H1 (cell line): ENCODE measurements at regions of chr4 and their contacts with region 1.

Region 1: GRCh38 chr4:121484633-121485032 is 103.8 kb upstream of the QRFPR start:
- DNase-seq: no peak
- H3K4me3 ChIP-seq: no peak overlapping the region
- H3K27ac ChIP-seq: no peak overlapping the region
- H3K4me1 ChIP-seq: no peaks in the 10 kb centered on the region
- H3K27me3 ChIP-seq: no peaks in the 10 kb centered on the region
- CTCF ChIP-seq: peak; percentile 59 to 87 (median 82)
- EP300 ChIP-seq: no peak
- POLR2A ChIP-seq: no peak
- RAD21 ChIP-seq: peak; percentile 70 to 75

Region 2: DNA sequence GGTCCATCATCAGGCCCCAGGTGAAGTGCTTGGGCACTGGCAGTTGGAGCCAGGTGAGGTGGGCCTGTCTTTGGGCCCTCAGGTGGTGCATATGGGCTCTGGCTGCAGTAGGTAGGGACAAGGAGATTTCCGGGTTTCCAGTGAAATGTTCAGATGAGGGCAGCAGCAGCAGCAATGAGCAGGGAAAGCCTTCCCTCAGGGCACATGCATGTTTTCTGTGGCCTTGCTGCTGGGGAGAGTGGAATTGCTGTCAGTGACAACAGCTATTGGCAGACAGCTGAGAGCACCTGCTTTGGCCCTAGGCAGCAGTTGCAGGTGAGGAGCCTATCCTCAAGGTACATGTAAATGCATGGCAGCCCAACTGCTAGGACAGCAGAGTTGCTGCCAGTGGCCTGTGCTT is 45.0 kb before region 1 on chr4:
- CTCF ChIA-PET with region 1: no interaction called
- POLR2A ChIA-PET with region 1: no interaction called
- DNase-seq: no peak
- H3K4me3 ChIP-seq: no peak overlapping the region
- H3K27ac ChIP-seq: no peak overlapping the region
- H3K4me1 ChIP-seq: no peaks in the 10 kb centered on the region
- H3K27me3 ChIP-seq: no peaks in the 10 kb centered on the region
- CTCF ChIP-seq: no peak
- EP300 ChIP-seq: no peak
- POLR2A ChIP-seq: no peak
- RAD21 ChIP-seq: no peak

Region 3: DNA sequence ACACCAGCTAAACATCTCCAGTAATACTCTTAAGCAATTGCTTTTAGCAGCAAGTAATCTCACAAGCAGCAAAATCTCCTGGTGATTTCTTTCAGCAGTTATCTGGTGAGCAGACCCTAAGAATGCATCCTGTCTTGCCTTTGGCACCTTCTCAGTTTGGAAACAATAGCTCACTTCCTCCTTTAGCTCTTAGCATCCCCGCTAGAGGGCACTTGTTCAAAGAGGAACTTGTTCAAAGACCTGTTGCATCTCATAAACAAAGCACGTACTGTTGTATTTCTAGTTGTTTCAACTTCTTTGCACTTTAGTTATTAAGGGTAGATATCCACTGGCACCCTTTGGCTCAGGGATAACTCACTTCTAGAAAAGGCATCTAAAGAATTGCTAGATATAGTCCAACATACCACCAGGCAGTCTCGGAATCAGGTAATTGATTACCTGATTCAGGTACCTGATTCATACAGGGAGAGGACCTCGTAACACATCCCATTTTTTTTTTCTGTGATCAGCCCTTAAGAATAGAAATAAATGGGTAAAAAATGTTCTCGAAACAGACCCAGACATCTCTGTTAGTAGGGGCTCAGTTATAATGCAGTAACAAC is 21.9 kb before region 1 on chr4:
- CTCF ChIA-PET with region 1: interaction called, 17 read pairs
- POLR2A ChIA-PET with region 1: no interaction called
- DNase-seq: no peak
- H3K4me3 ChIP-seq: no peak overlapping the region
- H3K27ac ChIP-seq: no peak overlapping the region
- H3K4me1 ChIP-seq: 0 out of 7 replicates have a peak, but pooled peaks cover 0 to 2% (median 0%) of the 10 kb centered on the region in 4 experiments
- H3K27me3 ChIP-seq: no peaks in the 10 kb centered on the region
- CTCF ChIP-seq: peak in 2 of 3 experiments; percentile 73 to 90; a peak in 3 of 4 replicates
- EP300 ChIP-seq: no peak
- POLR2A ChIP-seq: no peak
- RAD21 ChIP-seq: peak; percentile 63 to 66

Region 4: DNA sequence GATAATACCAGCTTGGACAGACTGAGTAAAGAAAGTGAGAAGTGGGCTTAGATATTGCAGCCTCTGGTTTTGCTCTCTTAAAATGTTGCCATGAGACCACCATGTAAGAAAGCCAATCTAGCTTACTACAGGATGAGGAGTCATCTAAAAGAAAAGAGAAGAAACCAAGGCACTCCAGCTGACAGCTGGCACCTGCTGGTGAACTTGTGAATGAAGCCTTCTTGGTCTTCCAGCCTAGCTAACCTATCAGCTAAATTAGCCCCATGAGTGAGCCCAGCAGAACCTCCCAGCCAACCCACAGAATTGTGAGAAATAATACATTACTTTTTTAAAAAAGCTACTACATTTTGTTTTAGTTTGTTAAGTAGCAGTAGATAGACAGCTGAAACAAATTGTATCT is 50.7 kb after region 1 on chr4:
- CTCF ChIA-PET with region 1: interaction called, 12 read pairs
- POLR2A ChIA-PET with region 1: no interaction called
- DNase-seq: no peak
- H3K4me3 ChIP-seq: no peak overlapping the region
- H3K27ac ChIP-seq: no peak overlapping the region
- H3K4me1 ChIP-seq: no peaks in the 10 kb centered on the region
- H3K27me3 ChIP-seq: no peaks in the 10 kb centered on the region
- CTCF ChIP-seq: peak in 2 of 3 experiments; percentile 5 to 15; a peak in 1 of 4 replicates
- EP300 ChIP-seq: no peak
- POLR2A ChIP-seq: no peak
- RAD21 ChIP-seq: peak in 1 of 2 experiments; percentile 22; a peak in 1 of 4 replicates

Region 5: DNA sequence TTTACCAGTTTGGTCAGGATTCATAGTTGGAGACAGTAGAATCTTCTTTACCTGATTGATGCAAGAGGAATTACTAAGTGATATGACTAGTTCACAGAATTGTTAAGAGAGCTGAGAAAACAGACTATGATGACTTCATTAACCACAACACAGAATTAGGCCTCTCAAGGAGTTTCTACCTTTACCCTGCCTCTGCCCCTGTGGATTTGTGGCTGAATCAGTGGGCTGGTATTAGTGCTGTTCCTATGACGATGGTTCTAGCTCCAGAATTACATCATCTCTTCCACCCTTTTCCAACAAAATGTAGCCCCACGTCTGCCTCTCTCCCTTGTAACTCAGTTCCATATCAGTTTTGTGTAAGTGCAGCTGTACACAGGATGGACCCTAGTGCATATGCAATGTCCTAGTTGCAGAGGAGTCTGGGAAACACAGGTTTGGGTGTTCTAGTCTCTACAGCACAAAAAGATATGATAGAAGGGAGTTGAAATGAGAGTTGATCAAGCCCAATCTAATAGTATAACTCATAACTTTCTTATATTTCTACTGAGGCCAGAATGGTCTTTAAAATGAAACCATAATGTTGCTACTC is 112.8 kb after region 1 on chr4:
- CTCF ChIA-PET with region 1: no interaction called
- POLR2A ChIA-PET with region 1: no interaction called
- DNase-seq: no peak
- H3K4me3 ChIP-seq: no peak overlapping the region
- H3K27ac ChIP-seq: no peak overlapping the region
- H3K4me1 ChIP-seq: no peaks in the 10 kb centered on the region
- H3K27me3 ChIP-seq: peaks cover 0 to 2% (median 0%) of the 10 kb centered on the region in 4 experiments; a peak in 1 of 7 replicates
- CTCF ChIP-seq: no peak
- EP300 ChIP-seq: no peak
- POLR2A ChIP-seq: no peak
- RAD21 ChIP-seq: no peak